ENCODE measurements at regions of chr4 and their contacts with region 1.

Region 1: GRCh38 chr4:80215449-80216052 is 18.2 kb downstream of the PRDM8 start:
- DNase-seq: peak in 6 of 9 donors; percentile 28 to 57 (median 38)
- ATAC-seq: peak; percentile 61
- H3K4me3 ChIP-seq: no peak overlapping the region
- H3K4me3 Mint-ChIP-seq: peak overlapping the region in 2 of 10 donors; percentile 20 to 28
- H3K27ac ChIP-seq: no peak overlapping the region
- H3K27ac Mint-ChIP-seq: no peak overlapping the region
- H3K4me1 ChIP-seq: no peaks in the 10 kb centered on the region
- H3K4me1 Mint-ChIP-seq: peaks cover 0 to 7% (median 0%) of the 10 kb centered on the region in 7 donors
- H3K27me3 ChIP-seq: peaks cover 0 to 4% of the 10 kb centered on the region in 2 donors
- H3K27me3 Mint-ChIP-seq: peaks cover 0 to 61% (median 37%) of the 10 kb centered on the region in 5 donors

Region 2: DNA sequence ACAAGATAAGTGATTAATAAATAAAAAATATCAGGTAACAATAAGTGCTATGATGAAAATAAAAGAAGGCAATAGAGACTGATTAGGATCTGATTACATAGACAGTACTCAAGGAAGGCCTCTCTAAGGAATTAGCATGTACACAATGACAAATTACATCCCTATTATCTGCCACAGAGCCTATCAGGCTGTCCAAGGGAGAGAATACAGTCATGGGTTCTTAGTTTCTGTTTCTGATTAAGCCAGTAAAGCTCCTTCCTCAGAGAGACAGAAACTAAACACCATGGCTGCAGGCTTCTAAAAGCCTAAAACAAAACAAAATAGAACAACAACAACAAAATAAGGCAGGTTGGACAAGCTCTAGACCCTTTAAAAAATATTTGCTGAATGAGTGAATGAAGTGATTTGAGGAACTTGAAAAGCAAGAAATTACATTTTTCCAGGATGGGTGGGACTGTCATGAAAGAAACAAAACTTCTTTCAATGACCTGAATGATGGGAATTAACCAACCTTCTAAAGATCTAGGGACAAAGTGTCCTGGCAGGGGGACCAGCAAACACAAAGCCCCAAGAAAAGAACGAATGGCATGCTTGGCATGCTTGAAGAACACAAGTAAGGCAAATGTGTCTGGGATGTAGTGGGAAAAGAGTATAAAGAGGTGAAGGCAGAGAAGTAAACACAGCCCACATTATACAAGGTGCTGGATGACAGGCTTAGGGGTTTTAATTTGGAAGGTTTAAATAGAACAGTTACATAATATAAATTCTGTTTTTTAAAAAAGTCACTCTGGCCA is 933.8 kb before region 1 on chr4:
- CTCF ChIA-PET with region 1: no interaction called
- POLR2A ChIA-PET with region 1: no interaction called
- intact Hi-C with region 1: loop called in 1 of 2 experiments (anchors 10 kb)
- DNase-seq: no peak
- ATAC-seq: no peak
- H3K4me3 ChIP-seq: no peak overlapping the region
- H3K4me3 Mint-ChIP-seq: no peak overlapping the region
- H3K27ac ChIP-seq: no peak overlapping the region
- H3K27ac Mint-ChIP-seq: no peak overlapping the region
- H3K4me1 ChIP-seq: no peaks in the 10 kb centered on the region
- H3K4me1 Mint-ChIP-seq: no peaks in the 10 kb centered on the region
- H3K27me3 ChIP-seq: no peaks in the 10 kb centered on the region
- H3K27me3 Mint-ChIP-seq: no peaks in the 10 kb centered on the region

Region 3: GRCh38 chr4:79576429-79576753 is 639.2 kb before region 1 on chr4:
- CTCF ChIA-PET with region 1: no interaction called
- POLR2A ChIA-PET with region 1: no interaction called
- intact Hi-C with region 1: loop called in 1 of 2 experiments (anchors 1 kb)
- DNase-seq: peak in 2 of 9 donors; percentile 1 to 16
- ATAC-seq: peak; percentile 57
- H3K4me3 ChIP-seq: no peak overlapping the region
- H3K4me3 Mint-ChIP-seq: no peak overlapping the region
- H3K27ac ChIP-seq: no peak overlapping the region
- H3K27ac Mint-ChIP-seq: no peak overlapping the region
- H3K4me1 ChIP-seq: no peaks in the 10 kb centered on the region
- H3K4me1 Mint-ChIP-seq: no peaks in the 10 kb centered on the region
- H3K27me3 ChIP-seq: no peaks in the 10 kb centered on the region
- H3K27me3 Mint-ChIP-seq: peaks cover 0 to 17% (median 3%) of the 10 kb centered on the region in 5 donors

Region 4: GRCh38 chr4:79757600-79757999 is 458.0 kb before region 1 on chr4:
- CTCF ChIA-PET with region 1: no interaction called
- POLR2A ChIA-PET with region 1: no interaction called
- intact Hi-C with region 1: loop called in 1 of 2 experiments (anchors 10 kb)
- DNase-seq: no peak
- ATAC-seq: no peak
- H3K4me3 ChIP-seq: no peak overlapping the region
- H3K4me3 Mint-ChIP-seq: no peak overlapping the region
- H3K27ac ChIP-seq: no peak overlapping the region
- H3K27ac Mint-ChIP-seq: no peak overlapping the region
- H3K4me1 ChIP-seq: no peaks in the 10 kb centered on the region
- H3K4me1 Mint-ChIP-seq: no peaks in the 10 kb centered on the region
- H3K27me3 ChIP-seq: no peaks in the 10 kb centered on the region
- H3K27me3 Mint-ChIP-seq: peaks cover 0 to 5% (median 1%) of the 10 kb centered on the region in 5 donors

Region 5: DNA sequence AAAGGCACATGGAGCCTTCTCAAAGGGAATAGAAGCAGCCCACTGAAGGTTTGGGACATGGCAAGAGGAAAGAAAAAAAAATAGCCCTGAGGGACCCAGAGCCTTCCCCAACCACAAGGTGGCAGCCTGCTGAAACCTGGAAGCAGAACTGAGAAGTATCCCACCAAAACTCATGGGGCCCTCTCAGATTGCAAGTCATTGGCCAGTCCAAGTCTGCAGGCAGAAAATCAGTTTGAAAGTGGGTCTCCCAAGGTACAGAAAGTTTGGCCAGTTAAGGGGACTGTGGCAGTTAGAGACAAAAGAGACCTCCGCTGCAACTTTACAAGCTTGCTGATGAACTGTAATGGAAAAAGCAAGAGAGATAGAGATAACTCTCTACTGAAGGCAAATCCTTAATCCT is 298.3 kb before region 1 on chr4:
- CTCF ChIA-PET with region 1: no interaction called
- POLR2A ChIA-PET with region 1: interaction called, 3 read pairs
- intact Hi-C with region 1: loop called (anchors 1 kb)
- DNase-seq: peak in 7 of 9 donors; percentile 10 to 43 (median 22)
- ATAC-seq: peak; percentile 62
- H3K4me3 ChIP-seq: no peak overlapping the region
- H3K4me3 Mint-ChIP-seq: no peak overlapping the region
- H3K27ac ChIP-seq: no peak overlapping the region
- H3K27ac Mint-ChIP-seq: no peak overlapping the region
- H3K4me1 ChIP-seq: no peaks in the 10 kb centered on the region
- H3K4me1 Mint-ChIP-seq: peaks cover 0 to 16% (median 6%) of the 10 kb centered on the region in 7 donors
- H3K27me3 ChIP-seq: no peaks in the 10 kb centered on the region
- H3K27me3 Mint-ChIP-seq: no peaks in the 10 kb centered on the region

Region 6: DNA sequence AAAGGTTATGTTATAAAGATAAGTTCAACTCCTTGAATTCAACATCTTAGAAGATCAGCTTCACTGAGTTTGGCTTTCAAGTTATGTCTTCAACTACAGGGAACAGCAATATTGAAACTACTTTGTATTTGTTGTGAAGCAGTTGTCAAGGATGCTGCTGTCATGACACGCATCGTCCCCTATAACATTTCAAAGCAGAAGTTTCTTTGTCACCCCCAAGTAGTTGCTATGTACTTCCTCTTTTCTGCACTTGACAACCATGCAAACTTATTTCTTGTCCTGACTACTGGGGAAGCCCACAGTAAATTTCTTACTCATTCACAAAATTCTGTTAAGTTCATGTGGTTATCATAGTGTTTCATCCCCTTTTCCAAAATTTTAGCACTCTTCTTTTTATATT is 156.8 kb before region 1 on chr4:
- CTCF ChIA-PET with region 1: no interaction called
- POLR2A ChIA-PET with region 1: no interaction called
- intact Hi-C with region 1: no loop called
- DNase-seq: peak in 7 of 9 donors; percentile 53 to 89 (median 84)
- ATAC-seq: peak; percentile 96
- H3K4me3 ChIP-seq: no peak overlapping the region
- H3K4me3 Mint-ChIP-seq: peak overlapping the region; percentile 54 to 86 (median 74)
- H3K27ac ChIP-seq: peak overlapping the region; percentile 86
- H3K27ac Mint-ChIP-seq: peak overlapping the region; percentile 91 to 99 (median 96)
- H3K4me1 ChIP-seq: peaks cover 10 to 13% of the 10 kb centered on the region in 2 donors
- H3K4me1 Mint-ChIP-seq: peaks cover 12 to 50% (median 42%) of the 10 kb centered on the region in 7 donors
- H3K27me3 ChIP-seq: no peaks in the 10 kb centered on the region
- H3K27me3 Mint-ChIP-seq: no peaks in the 10 kb centered on the region

Measured in naive thymus-derived CD4-positive, alpha-beta T cell (primary cell).